H1 (cell line): ENCODE measurements at regions of chr11 and their contacts with region 1.

Region 1: DNA sequence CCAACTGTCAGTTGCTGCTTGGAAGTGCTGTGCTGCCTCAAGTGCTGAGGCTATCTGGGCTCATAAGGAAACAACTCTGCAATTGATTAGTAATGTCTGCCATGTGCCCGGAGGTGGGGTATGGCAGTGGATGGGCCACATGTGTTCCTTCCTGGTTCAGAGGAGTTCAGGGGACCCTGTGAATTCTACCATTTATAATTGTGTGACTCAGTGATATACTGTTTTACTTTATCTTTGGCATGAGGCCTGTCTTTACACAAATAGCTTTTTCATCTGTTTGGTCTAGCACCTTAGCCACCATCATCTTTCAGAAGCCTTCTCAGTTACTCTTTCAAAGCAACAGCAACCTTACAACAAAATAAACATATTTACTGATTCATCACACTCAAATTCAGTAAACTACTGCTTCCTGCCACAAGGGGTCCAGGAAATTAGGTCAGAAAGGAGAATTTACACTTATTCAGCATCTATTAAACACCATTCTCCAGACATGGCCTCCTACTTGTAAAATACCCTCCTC is 20.9 kb downstream of the DKK3 start:
- DNase-seq: no peak
- H3K4me3 ChIP-seq: no peak overlapping the region
- H3K27ac ChIP-seq: no peak overlapping the region
- H3K4me1 ChIP-seq: peaks cover 0 to 7% (median 1%) of the 10 kb centered on the region in 4 experiments; a peak in 3 of 7 replicates
- H3K27me3 ChIP-seq: no peaks in the 10 kb centered on the region
- CTCF ChIP-seq: peak in 1 of 3 experiments; percentile 39; a peak in 1 of 4 replicates
- EP300 ChIP-seq: no peak
- POLR2A ChIP-seq: no peak
- RAD21 ChIP-seq: no peak

Region 2: DNA sequence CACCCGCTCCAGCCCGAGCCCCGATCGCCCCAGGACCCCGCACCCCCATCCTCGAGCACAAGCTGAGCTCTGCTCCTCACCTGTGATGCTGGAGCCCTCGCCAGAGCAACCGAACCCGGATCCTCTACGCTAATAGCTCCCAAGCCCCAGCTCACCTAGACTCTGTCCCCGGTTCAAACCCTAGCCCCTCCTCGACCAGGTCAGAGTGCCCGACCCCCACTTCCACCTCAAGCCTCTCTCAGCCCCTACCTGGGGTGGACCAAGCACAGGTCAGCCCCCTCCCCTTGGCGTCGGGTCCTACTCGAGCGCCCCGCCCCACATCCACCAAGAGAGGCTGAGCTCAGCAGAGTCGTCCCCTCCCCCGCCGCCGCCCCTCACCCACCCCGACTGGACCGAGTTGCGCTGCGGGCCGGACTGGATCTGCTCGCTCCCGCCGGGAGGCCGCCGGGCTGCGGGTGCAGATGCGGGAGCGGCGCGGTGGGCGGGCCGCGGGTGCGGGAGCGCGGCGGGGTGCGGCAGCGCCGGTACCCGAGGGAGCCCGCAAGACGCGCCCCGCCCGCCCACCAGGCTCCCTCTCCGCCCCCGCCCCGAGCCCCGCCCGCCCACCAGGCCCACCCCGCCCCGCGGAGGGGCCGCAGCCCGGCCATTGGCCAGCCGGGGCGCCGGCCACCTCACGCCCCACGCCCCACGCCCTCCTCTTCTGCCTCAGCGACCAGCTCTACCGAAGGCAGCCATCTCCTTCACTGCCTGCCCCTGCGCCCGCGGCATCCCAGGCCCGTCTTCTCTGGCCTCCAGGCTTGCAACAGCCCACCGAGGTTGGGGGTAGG is 21.4 kb after region 1 on chr11:
- CTCF ChIA-PET with region 1: interaction called, 8 read pairs
- POLR2A ChIA-PET with region 1: interaction called, 10 read pairs
- DNase-seq: peak in 1 of 2 experiments; percentile 88
- H3K4me3 ChIP-seq: peak overlapping the region; percentile 70 to 80 (median 72)
- H3K27ac ChIP-seq: no peak overlapping the region
- H3K4me1 ChIP-seq: peaks cover 0 to 19% (median 5%) of the 10 kb centered on the region in 4 experiments; a peak in 6 of 7 replicates
- H3K27me3 ChIP-seq: peaks cover 0 to 13% (median 10%) of the 10 kb centered on the region in 4 experiments; a peak in 4 of 7 replicates
- CTCF ChIP-seq: no peak
- EP300 ChIP-seq: no peak
- POLR2A ChIP-seq: no peak
- RAD21 ChIP-seq: 0 out of 4 replicates have a peak, but pooled peaks of 1 of the 2 experiments have one; percentile 4

Region 3: GRCh38 chr11:12110201-12110713 is 122.7 kb after region 1 on chr11 and contains the start of gene MICAL2:
- CTCF ChIA-PET with region 1: no interaction called
- POLR2A ChIA-PET with region 1: no interaction called
- DNase-seq: peak; percentile 61 to 87
- H3K4me3 ChIP-seq: peak within 1 kb of the TSS; percentile 36 to 71 (median 50)
- H3K27ac ChIP-seq: no peak within 1 kb of the TSS
- H3K4me1 ChIP-seq: peaks cover 0 to 10% (median 4%) of the 10 kb centered on the region in 4 experiments; a peak in 5 of 7 replicates
- H3K27me3 ChIP-seq: peaks cover 0 to 35% (median 30%) of the 10 kb centered on the region in 4 experiments; a peak in 5 of 7 replicates
- CTCF ChIP-seq: no peak
- EP300 ChIP-seq: no peak
- POLR2A ChIP-seq: no peak
- RAD21 ChIP-seq: no peak
- total RNA-seq, gene MICAL2: 4.1 and 4.2 TPM in 2 replicates